SK-N-SH (cell line): ENCODE measurements at regions of chrX and their contacts with region 1.

Region 1: GRCh38 chrX:40153335-40154249 is 55.8 kb upstream of the BCOR start:
- DNase-seq: peak; percentile 76
- H3K4me3 ChIP-seq: peak overlapping the region; percentile 41 to 47; a peak in 3 of 4 replicates
- H3K27ac ChIP-seq: peak overlapping the region; percentile 35 to 98; a peak in 3 of 4 replicates
- H3K4me1 ChIP-seq: peaks cover 0 to 43% of the 10 kb centered on the region in 2 experiments; a peak in 2 of 4 replicates
- H3K27me3 ChIP-seq: peaks cover 40% of the 10 kb centered on the region; the same call in 1 of the 2 replicates
- CTCF ChIP-seq: no peak
- EP300 ChIP-seq: no peak
- RAD21 ChIP-seq: no peak

Region 2: GRCh38 chrX:40097497-40098263 is 55.9 kb before region 1 on chrX and contains the start of gene BCOR:
- CTCF ChIA-PET with region 1: interaction called, 5 read pairs
- POLR2A ChIA-PET with region 1: interaction called, 38 read pairs
- DNase-seq: peak; percentile 79
- H3K4me3 ChIP-seq: peak within 1 kb of the TSS; percentile 60 to 68
- H3K27ac ChIP-seq: peak within 1 kb of the TSS; percentile 63 to 83; a peak in 3 of 4 replicates
- H3K4me1 ChIP-seq: peaks cover 7 to 24% of the 10 kb centered on the region in 2 experiments; a peak in 2 of 4 replicates
- H3K27me3 ChIP-seq: peaks cover 28% of the 10 kb centered on the region; the same call in 1 of the 2 replicates
- CTCF ChIP-seq: no peak
- EP300 ChIP-seq: no peak
- RAD21 ChIP-seq: no peak
- polyA plus RNA-seq, gene BCOR: 6.9 and 8.8 TPM in 2 replicates

Region 3: GRCh38 chrX:40164751-40165150 is 11.2 kb after region 1 on chrX:
- CTCF ChIA-PET with region 1: interaction called, 3 read pairs
- POLR2A ChIA-PET with region 1: interaction called, 26 read pairs
- DNase-seq: no peak
- H3K4me3 ChIP-seq: no peak overlapping the region
- H3K27ac ChIP-seq: peak overlapping the region in 1 of 2 experiments; percentile 61; a peak in 2 of 4 replicates
- H3K4me1 ChIP-seq: peaks cover 8 to 51% of the 10 kb centered on the region in 2 experiments; a peak in 3 of 4 replicates
- H3K27me3 ChIP-seq: peaks cover 46% of the 10 kb centered on the region
- CTCF ChIP-seq: no peak
- EP300 ChIP-seq: no peak
- RAD21 ChIP-seq: no peak